ENCODE measurements at regions of chr3 and their contacts with region 1.

Region 1: GRCh38 chr3:152359395-152360240 is 90.9 kb downstream of the MBNL1 start:
- DNase-seq: no peak
- H3K4me3 Mint-ChIP-seq: no peak overlapping the region
- H3K27ac Mint-ChIP-seq: peak overlapping the region; percentile 7
- H3K4me1 Mint-ChIP-seq: peaks cover 79% of the 10 kb centered on the region
- H3K27me3 Mint-ChIP-seq: no peaks in the 10 kb centered on the region

Region 2: GRCh38 chr3:152193673-152194267 is 165.8 kb before region 1 on chr3:
- CTCF ChIA-PET with region 1: no interaction called
- intact Hi-C with region 1: no loop called
- DNase-seq: peak; percentile 57
- H3K4me3 Mint-ChIP-seq: peak overlapping the region; percentile 72
- H3K27ac Mint-ChIP-seq: peak overlapping the region; percentile 88
- H3K4me1 Mint-ChIP-seq: peaks cover 82% of the 10 kb centered on the region
- H3K27me3 Mint-ChIP-seq: no peaks in the 10 kb centered on the region

Region 3: DNA sequence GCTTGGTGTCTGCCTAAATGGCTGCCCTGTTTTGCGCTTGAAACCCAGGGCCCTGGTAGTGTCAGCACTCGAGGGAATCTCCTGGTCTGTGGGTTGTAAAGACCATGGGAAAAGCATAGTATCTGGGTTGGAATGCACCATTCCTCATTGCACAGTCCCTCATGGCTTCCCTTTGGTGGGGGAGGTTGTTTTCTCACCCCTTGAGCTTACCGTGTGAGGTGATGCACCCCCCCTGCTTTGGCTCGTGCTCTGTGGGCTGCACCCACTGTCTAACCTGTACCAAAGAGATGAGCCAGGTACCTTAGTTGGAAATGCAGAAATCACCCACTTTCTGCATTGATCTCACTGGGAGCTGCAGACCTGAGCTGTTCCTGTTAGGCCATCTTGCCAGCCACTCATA is 13.8 kb after region 1 on chr3:
- CTCF ChIA-PET with region 1: interaction called, 3 read pairs
- intact Hi-C with region 1: loop called (anchors 2 kb)
- DNase-seq: no peak
- H3K4me3 Mint-ChIP-seq: no peak overlapping the region
- H3K27ac Mint-ChIP-seq: peak overlapping the region; percentile 73
- H3K4me1 Mint-ChIP-seq: peaks cover 85% of the 10 kb centered on the region
- H3K27me3 Mint-ChIP-seq: no peaks in the 10 kb centered on the region

Measured in activated naive CD4-positive, alpha-beta T cell treated with anti-CD3 and anti-CD28 coated beads for 36 hours (primary cell).